H1 (cell line): ENCODE measurements at regions of chr14 and their contacts with region 1.

Region 1: DNA sequence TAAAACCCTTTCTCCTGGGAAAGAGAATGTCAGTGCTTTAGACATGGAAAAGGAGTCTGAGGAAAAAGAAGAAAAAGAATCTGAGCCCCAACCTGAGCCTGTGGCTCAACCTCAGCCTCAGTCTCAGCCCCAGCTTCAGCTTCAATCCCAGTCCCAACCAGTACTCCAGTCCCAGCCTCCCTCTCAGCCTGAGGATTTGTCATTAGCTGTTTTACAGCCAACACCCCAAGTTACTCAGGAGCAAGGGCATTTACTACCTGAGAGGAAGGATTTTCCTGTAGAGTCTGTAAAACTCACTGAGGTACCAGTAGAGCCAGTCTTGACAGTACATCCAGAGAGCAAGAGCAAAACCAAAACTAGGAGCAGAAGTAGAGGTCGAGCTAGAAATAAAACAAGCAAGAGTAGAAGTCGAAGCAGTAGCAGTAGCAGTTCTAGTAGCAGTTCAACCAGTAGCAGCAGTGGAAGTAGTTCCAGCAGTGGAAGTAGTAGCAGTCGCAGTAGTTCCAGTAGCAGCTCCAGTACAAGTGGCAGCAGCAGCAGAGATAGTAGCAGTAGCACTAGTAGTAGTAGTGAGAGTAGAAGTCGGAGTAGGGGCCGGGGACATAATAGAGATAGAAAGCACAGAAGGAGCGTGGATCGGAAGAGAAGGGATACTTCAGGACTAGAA is 6.1 kb downstream of the PNN start:
- DNase-seq: no peak
- H3K4me3 ChIP-seq: no peak overlapping the region
- H3K27ac ChIP-seq: no peak overlapping the region; the same call in 1 of the 2 replicates
- H3K4me1 ChIP-seq: no peaks in the 10 kb centered on the region
- H3K27me3 ChIP-seq: no peaks in the 10 kb centered on the region
- CTCF ChIP-seq: no peak
- EP300 ChIP-seq: no peak
- POLR2A ChIP-seq: peak; percentile 29 to 68
- RAD21 ChIP-seq: no peak

Region 2: GRCh38 chr14:39157491-39157890 is 23.7 kb before region 1 on chr14:
- CTCF ChIA-PET with region 1: no interaction called
- POLR2A ChIA-PET with region 1: interaction called, 21 read pairs
- DNase-seq: no peak
- H3K4me3 ChIP-seq: no peak overlapping the region
- H3K27ac ChIP-seq: no peak overlapping the region
- H3K4me1 ChIP-seq: no peaks in the 10 kb centered on the region
- H3K27me3 ChIP-seq: no peaks in the 10 kb centered on the region
- CTCF ChIP-seq: no peak
- EP300 ChIP-seq: no peak
- POLR2A ChIP-seq: no peak
- RAD21 ChIP-seq: no peak

Region 3: GRCh38 chr14:39203659-39204606 is 22.8 kb after region 1 on chr14:
- CTCF ChIA-PET with region 1: interaction called, 3 read pairs
- POLR2A ChIA-PET with region 1: interaction called, 31 read pairs
- DNase-seq: peak in 1 of 2 experiments; percentile 9
- H3K4me3 ChIP-seq: no peak overlapping the region; a peak in 1 of 8 replicates
- H3K27ac ChIP-seq: no peak overlapping the region; the same call in 1 of the 2 replicates
- H3K4me1 ChIP-seq: peaks cover 0 to 4% (median 3%) of the 10 kb centered on the region in 4 experiments; a peak in 2 of 7 replicates
- H3K27me3 ChIP-seq: no peaks in the 10 kb centered on the region
- CTCF ChIP-seq: no peak
- EP300 ChIP-seq: no peak
- POLR2A ChIP-seq: no peak
- RAD21 ChIP-seq: no peak

Region 4: DNA sequence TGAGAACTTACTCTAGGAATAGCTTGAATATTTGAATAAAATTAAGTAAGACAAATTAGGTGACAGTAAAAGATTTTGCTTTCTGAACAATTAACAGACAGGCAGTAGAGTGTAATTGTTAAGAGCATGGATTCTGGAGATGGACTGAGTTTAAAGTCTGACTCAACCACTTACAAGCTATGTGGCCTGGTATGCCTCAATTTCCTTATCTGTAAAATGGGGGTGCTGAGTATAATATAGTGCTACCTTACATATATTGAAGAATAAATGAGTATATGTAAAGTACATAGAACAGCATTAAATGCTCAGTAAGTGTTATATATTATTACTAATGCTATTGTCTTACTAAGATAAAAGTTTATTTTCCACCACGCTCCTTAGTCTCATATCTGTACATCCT is 59.6 kb after region 1 on chr14:
- CTCF ChIA-PET with region 1: no interaction called
- POLR2A ChIA-PET with region 1: no interaction called
- DNase-seq: no peak
- H3K4me3 ChIP-seq: no peak overlapping the region
- H3K27ac ChIP-seq: no peak overlapping the region
- H3K4me1 ChIP-seq: no peaks in the 10 kb centered on the region
- H3K27me3 ChIP-seq: no peaks in the 10 kb centered on the region
- CTCF ChIP-seq: no peak
- EP300 ChIP-seq: no peak
- POLR2A ChIP-seq: no peak
- RAD21 ChIP-seq: no peak

Region 5: DNA sequence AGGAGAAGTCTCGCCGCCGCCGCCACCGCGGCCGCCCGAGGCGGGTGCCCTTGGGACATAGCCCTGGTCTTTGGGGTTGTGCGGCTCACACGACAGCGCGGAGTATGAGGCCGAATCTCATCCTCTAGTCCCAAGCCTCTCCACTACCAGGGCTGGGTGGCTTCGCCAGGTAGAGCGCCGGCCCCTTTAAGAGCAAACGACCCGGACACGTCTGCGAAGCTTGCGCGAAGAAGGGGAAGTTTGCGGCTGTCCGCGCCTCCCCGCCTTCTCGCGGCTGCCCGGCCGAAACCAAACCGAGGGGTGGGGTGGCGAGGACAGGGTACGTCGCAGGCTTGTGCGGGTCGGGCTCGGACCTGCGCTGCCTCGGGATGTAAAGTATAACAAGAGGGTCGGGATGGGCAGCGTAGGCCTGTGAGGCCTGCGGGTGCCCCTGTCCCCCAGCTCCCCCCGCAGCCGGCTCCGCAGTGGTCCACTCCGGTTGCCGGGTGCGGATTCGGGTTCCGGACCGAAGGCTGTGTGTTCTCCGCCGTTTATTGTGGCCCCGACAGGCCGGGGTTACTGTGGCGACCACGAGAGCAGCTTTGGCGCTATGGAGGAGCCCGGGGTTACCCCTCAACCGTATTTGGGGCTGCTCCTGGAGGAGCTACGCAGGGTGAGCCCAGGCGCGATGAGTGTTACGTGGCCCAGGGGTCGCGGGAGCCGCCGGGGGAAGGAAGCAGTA is 85.9 kb after region 1 on chr14:
- CTCF ChIA-PET with region 1: no interaction called
- POLR2A ChIA-PET with region 1: interaction called, 14 read pairs
- DNase-seq: peak; percentile 51 to 88
- H3K4me3 ChIP-seq: peak overlapping the region; percentile 75 to 93 (median 84)
- H3K27ac ChIP-seq: peak overlapping the region; percentile 90
- H3K4me1 ChIP-seq: peaks cover 0 to 7% (median under 1%) of the 10 kb centered on the region in 4 experiments; a peak in 3 of 7 replicates
- H3K27me3 ChIP-seq: no peaks in the 10 kb centered on the region
- CTCF ChIP-seq: no peak
- EP300 ChIP-seq: peak in 1 of 2 experiments; percentile 96; a peak in 2 of 3 replicates
- POLR2A ChIP-seq: peak in 1 of 2 experiments; percentile 68; a peak in 2 of 3 replicates
- RAD21 ChIP-seq: no peak